Head of caudate nucleus (tissue), 42 donors: ENCODE measurements at regions of chr14 and their contacts with region 1.

Region 1: GRCh38 chr14:96424109-96424989 is 32.4 kb downstream of the AK7 start:
- DNase-seq: peak in 28 of 42 donors; percentile 4 to 78 (median 36)

Region 2: GRCh38 chr14:96297000-96297399 is 127.3 kb before region 1 on chr14:
- intact Hi-C with region 1: loop called (anchors 5 kb)
- DNase-seq: no peak